Dendritic cell treated with granulocyte-macrophage colony-stimulating factor and Interleukin-4, amounts not matched to agents 40 ng/mL and 50 ng/mL, for 4 days (primary cell): ENCODE measurements at regions of chr4 and their contacts with region 1.

Region 1: GRCh38 chr4:102868781-102869568 is at the start of gene CISD2:
- H3K4me3 Mint-ChIP-seq: peak within 1 kb of the TSS; percentile 92
- H3K27ac Mint-ChIP-seq: peak within 1 kb of the TSS; percentile 96
- H3K4me1 Mint-ChIP-seq: peaks cover 25% of the 10 kb centered on the region
- H3K27me3 Mint-ChIP-seq: no peaks in the 10 kb centered on the region

Region 2: DNA sequence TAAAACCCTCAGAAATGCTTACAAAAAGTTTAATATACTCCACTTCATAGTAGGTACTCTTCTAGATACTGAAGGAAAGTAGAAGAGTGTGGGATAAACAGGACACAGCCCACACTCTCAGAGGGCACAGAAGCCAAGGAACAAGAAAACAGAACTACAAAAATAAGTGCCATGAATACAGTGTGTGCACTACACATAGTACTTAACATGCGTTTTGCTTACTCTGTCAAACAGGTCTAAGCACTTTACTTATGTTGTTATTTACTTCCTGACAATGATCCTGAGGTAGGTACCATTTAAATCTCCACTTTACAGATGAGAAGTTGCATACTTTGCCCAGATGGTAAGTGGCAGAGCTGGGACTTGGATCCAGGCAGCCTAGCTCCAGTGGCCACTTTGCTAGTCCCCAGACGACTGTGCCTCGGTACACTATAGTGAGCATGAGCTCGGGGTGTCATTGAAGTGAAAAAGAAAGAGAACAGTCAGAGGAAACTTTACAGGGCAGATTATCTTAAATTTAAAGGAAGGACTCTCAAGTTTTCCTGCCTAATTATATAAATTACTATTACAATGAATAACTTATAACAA is 958.1 kb before region 1 on chr4:
- intact Hi-C with region 1: no loop called
- H3K4me3 Mint-ChIP-seq: no peak overlapping the region
- H3K27ac Mint-ChIP-seq: no peak overlapping the region
- H3K4me1 Mint-ChIP-seq: no peaks in the 10 kb centered on the region
- H3K27me3 Mint-ChIP-seq: no peaks in the 10 kb centered on the region

Region 3: GRCh38 chr4:102799816-102800215 is 69.2 kb before region 1 on chr4:
- intact Hi-C with region 1: no loop called
- H3K4me3 Mint-ChIP-seq: no peak overlapping the region
- H3K27ac Mint-ChIP-seq: no peak overlapping the region
- H3K4me1 Mint-ChIP-seq: peaks cover 13% of the 10 kb centered on the region
- H3K27me3 Mint-ChIP-seq: no peaks in the 10 kb centered on the region

Region 4: GRCh38 chr4:102826890-102827673 is 41.9 kb before region 1 on chr4 and contains the start of gene UBE2D3:
- intact Hi-C with region 1: loop called (anchors 1 kb)
- H3K4me3 Mint-ChIP-seq: no peak within 1 kb of the TSS
- H3K27ac Mint-ChIP-seq: no peak within 1 kb of the TSS
- H3K4me1 Mint-ChIP-seq: peaks cover 27% of the 10 kb centered on the region
- H3K27me3 Mint-ChIP-seq: no peaks in the 10 kb centered on the region